ENCODE measurements at regions of chr15 and their contacts with region 1.

Region 1: GRCh38 chr15:80835338-80835737 is 56.2 kb downstream of the CEMIP start:
- DNase-seq: peak in 1 of 5 donors; percentile 41
- H3K4me3 ChIP-seq: no peak overlapping the region
- H3K27ac ChIP-seq: peak overlapping the region in 1 of 2 donors; percentile 67
- H3K4me1 ChIP-seq: peaks cover 27% of the 10 kb centered on the region
- H3K27me3 ChIP-seq: no peaks in the 10 kb centered on the region
- CTCF ChIP-seq: no peak
- EP300 ChIP-seq: no peak
- POLR2A ChIP-seq: no peak

Region 2: GRCh38 chr15:80773122-80773551 is 62.2 kb before region 1 on chr15:
- intact Hi-C with region 1: no loop called
- DNase-seq: no peak
- H3K4me3 ChIP-seq: no peak overlapping the region
- H3K27ac ChIP-seq: no peak overlapping the region
- H3K4me1 ChIP-seq: peaks cover 3% of the 10 kb centered on the region
- H3K27me3 ChIP-seq: no peaks in the 10 kb centered on the region
- CTCF ChIP-seq: no peak
- EP300 ChIP-seq: no peak
- POLR2A ChIP-seq: no peak

Region 3: GRCh38 chr15:80850941-80851451 is 15.7 kb after region 1 on chr15:
- intact Hi-C with region 1: loop called in 1 of 4 experiments (anchors 2 kb)
- DNase-seq: no peak
- H3K4me3 ChIP-seq: no peak overlapping the region
- H3K27ac ChIP-seq: no peak overlapping the region
- H3K4me1 ChIP-seq: peaks cover 8% of the 10 kb centered on the region
- H3K27me3 ChIP-seq: no peaks in the 10 kb centered on the region
- CTCF ChIP-seq: no peak
- EP300 ChIP-seq: no peak
- POLR2A ChIP-seq: no peak